Adrenal gland (tissue), 19 donors: ENCODE measurements at regions of chr19 and their contacts with region 1.

Region 1: GRCh38 chr19:12749938-12750521 is 1.6 kb upstream of the BEST2 start:
- DNase-seq: no peak
- H3K4me3 ChIP-seq: no peak overlapping the region
- H3K27ac ChIP-seq: no peak overlapping the region
- H3K4me1 ChIP-seq: no peaks in the 10 kb centered on the region
- H3K27me3 ChIP-seq: no peaks in the 10 kb centered on the region
- CTCF ChIP-seq: no peak
- POLR2A ChIP-seq: no peak

Region 2: DNA sequence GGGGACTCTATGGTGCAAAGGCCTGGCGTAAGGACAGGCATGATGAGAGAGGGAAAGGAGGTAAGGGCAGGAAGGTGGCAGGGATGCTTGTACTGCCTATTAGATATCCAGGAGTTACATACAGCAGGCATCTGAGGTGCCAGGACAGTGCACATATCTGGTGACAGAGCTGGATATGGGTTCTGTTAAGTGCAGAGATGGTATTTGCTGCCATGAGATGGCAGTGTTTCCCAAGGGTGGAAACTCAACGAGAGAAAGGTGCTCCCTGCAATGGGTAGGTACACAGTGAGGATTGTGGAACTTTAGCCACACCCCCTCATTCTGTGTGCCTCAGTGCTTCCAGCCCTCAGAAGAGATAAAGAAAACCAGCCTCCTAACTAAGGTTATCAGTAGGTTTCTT is 33.2 kb before region 1 on chr19:
- intact Hi-C with region 1: loop called in 1 of 2 experiments (anchors 5 kb)
- DNase-seq: no peak
- H3K4me3 ChIP-seq: no peak overlapping the region
- H3K27ac ChIP-seq: no peak overlapping the region
- H3K4me1 ChIP-seq: peaks cover 13 to 14% of the 10 kb centered on the region in 2 donors
- H3K27me3 ChIP-seq: no peaks in the 10 kb centered on the region
- CTCF ChIP-seq: peak in 4 of 6 experiments; percentile 9 to 35 (median 22)
- POLR2A ChIP-seq: no peak

Region 3: DNA sequence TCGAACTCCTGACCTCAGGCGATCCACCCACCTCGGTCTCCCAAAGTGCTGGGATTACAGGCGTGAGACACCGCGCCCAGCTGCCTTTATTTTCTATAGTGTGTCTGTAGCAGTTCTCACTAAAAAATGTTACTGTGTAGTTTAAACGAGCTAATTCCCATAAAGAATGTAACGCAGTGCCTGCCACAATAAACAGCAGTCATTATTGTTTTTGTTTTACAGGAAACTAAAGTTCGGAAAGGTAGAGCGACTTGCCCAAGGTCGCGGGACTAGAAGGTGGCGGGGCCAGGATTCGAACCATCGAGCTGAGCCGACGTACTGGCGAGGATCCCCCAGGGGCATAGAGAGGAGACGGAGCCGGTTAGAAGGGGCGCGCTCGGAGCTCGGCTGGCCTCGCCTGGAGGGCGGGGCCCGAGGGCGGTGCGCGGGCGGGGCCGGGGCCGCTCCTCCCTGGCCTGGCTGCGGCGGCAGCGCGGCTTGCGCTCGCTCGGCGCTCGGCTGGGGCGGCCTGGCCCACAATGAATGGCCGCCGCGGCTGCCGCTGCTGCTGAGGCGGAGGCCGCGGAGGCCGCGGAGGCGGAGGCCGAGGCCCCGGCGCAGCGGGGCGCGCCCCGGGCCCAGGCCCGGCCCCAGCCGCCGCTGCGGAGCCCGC is 367.9 kb after region 1 on chr19 and contains the start of gene NACC1:
- intact Hi-C with region 1: no loop called
- DNase-seq: peak; percentile 86 to 91 (median 89)
- H3K4me3 ChIP-seq: peak within 1 kb of the TSS; percentile 29 to 97 (median 74)
- H3K27ac ChIP-seq: peak within 1 kb of the TSS in 4 of 5 donors; percentile 35 to 85 (median 65)
- H3K4me1 ChIP-seq: peaks cover 32 to 46% of the 10 kb centered on the region in 2 donors
- H3K27me3 ChIP-seq: no peaks in the 10 kb centered on the region
- CTCF ChIP-seq: peak in 1 of 6 experiments; percentile 12
- POLR2A ChIP-seq: peak in 1 of 2 donors; percentile 33
- total RNA-seq, gene NACC1: 26.7 to 67.0 (median 41.2) TPM